ENCODE measurements at regions of chr20 and their contacts with region 1.

Region 1: DNA sequence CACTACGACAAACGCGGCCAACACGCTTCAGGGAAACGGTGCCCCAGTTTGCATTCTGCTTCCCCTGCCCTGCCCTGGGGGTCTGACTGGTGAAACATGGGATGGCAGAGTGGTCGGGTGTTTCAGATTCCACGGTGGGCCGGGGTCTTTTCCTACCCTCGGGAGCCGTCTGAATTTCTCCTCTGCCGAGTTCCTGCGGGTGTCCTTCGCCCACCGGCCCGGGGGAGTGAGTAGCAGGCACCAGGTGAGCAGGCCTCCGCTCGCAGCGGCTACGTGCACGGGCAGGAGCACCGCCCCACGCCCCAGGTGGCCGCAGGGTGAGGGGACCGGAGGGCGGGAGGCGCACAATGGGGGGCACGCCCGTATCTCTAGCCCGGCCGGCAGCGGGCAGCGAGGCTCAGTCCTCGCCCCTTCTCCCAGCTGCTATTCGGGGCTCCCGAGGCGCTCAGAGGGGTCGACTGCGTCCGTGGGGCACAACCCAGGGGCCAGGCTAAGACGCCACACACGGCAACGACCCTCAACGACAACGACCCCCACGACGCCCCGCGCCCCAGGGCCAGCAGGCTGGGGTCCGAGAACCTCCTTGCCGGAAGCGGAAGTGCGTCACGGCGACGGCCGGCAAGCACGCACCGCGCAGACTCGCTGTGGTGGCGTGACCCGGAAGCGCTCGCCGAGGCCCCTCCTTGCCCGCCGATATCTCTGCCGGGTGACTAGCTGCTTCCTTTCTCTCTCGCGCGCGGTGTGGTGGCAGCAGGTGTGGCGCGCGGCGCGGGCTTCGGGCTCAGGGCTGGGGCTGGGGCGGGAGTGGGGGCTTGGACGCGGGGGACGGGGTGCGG is at the start of gene RPS21:
- DNase-seq: peak; percentile 89 to 95 (median 92)
- ATAC-seq: peak; percentile 95
- H3K4me3 ChIP-seq: peak within 1 kb of the TSS; percentile 94
- H3K4me3 Mint-ChIP-seq: peak within 1 kb of the TSS; percentile 90 to 96 (median 92)
- H3K27ac ChIP-seq: peak within 1 kb of the TSS; percentile 98
- H3K27ac Mint-ChIP-seq: peak within 1 kb of the TSS; percentile 89 to 96 (median 93)
- H3K4me1 ChIP-seq: peaks cover 24 to 28% of the 10 kb centered on the region in 2 donors
- H3K4me1 Mint-ChIP-seq: peaks cover 40 to 59% (median 50%) of the 10 kb centered on the region in 7 donors
- H3K27me3 ChIP-seq: no peaks in the 10 kb centered on the region
- H3K27me3 Mint-ChIP-seq: no peaks in the 10 kb centered on the region
- total RNA-seq, gene RPS21: 2,026 to 3,407 (median 3,308) TPM

Region 2: GRCh38 chr20:62010551-62011402 is 375.8 kb before region 1 on chr20:
- CTCF ChIA-PET with region 1: interaction called, 3 read pairs
- POLR2A ChIA-PET with region 1: no interaction called
- intact Hi-C with region 1: loop called (anchors 1 to 5 kb)
- DNase-seq: peak; percentile 36 to 70 (median 66)
- ATAC-seq: peak; percentile 81
- H3K4me3 ChIP-seq: no peak overlapping the region
- H3K4me3 Mint-ChIP-seq: peak overlapping the region in 1 of 10 donors; percentile 6
- H3K27ac ChIP-seq: no peak overlapping the region
- H3K27ac Mint-ChIP-seq: peak overlapping the region in 6 of 9 donors; percentile 6 to 65 (median 43)
- H3K4me1 ChIP-seq: peaks cover 0 to 4% of the 10 kb centered on the region in 2 donors
- H3K4me1 Mint-ChIP-seq: peaks cover 6 to 24% (median 10%) of the 10 kb centered on the region in 7 donors
- H3K27me3 ChIP-seq: no peaks in the 10 kb centered on the region
- H3K27me3 Mint-ChIP-seq: no peaks in the 10 kb centered on the region

Region 3: DNA sequence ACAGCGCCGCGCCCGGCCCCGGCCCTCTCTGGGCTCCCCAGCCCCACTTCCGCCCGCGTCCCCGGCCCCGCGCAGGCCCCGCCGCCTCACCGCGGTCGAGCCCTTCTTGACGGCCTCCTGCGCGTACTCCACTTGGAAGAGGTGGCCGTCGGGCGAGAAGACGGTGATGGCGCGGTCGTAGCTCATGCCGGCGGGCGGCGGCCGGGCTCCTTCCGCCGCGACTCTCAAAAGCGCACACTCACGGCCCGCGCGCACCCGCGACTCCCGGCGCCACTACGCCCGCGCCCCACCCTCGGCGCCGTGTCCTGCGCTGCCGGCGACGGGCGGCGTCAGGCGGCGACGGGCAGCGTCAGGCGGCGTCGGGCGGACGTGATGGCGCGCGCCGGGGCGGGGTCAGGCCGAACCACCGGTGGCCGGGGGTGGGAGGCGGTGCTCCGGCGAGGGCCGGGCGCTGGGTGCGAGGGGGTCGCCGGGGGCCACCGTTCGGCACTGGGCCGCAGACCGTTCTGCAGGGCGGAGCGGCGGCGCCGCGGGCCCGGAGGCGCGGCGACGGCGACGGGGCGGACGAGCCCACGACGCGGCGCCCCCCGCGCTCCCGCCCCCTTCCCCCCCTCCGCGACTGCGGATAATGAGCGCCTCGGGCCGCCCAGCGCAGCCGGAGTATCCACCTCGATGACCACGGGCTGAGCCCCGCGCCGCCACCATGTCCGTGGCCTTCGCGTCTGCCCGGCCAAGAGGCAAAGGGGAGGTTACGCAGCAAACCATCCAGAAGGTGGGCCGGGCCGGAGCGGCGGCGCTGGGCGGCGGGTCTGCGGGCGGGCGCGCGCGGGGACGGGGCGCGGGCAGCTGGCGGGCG is 243.3 kb before region 1 on chr20 and contains the starts of genes PSMA7 and SS18L1:
- CTCF ChIA-PET with region 1: no interaction called
- POLR2A ChIA-PET with region 1: no interaction called
- intact Hi-C with region 1: loop called in 1 of 2 experiments (anchors 5 kb)
- DNase-seq: peak; percentile 79 to 90 (median 87)
- ATAC-seq: peak; percentile 91
- H3K4me3 ChIP-seq: peak within 1 kb of the TSS; percentile 65
- H3K4me3 Mint-ChIP-seq: peak within 1 kb of the TSS; percentile 89 to 98 (median 92)
- H3K27ac ChIP-seq: peak within 1 kb of the TSS; percentile 75
- H3K27ac Mint-ChIP-seq: peak within 1 kb of the TSS; percentile 80 to 97 (median 93)
- H3K4me1 ChIP-seq: peaks cover 28 to 36% of the 10 kb centered on the region in 2 donors
- H3K4me1 Mint-ChIP-seq: peaks cover 36 to 64% (median 55%) of the 10 kb centered on the region in 7 donors
- H3K27me3 ChIP-seq: no peaks in the 10 kb centered on the region
- H3K27me3 Mint-ChIP-seq: no peaks in the 10 kb centered on the region
- total RNA-seq, gene PSMA7: 125 to 301 (median 165) TPM
- total RNA-seq, gene SS18L1: 17.8 to 26.7 (median 22.6) TPM

Region 4: GRCh38 chr20:62258499-62259293 is 127.9 kb before region 1 on chr20:
- CTCF ChIA-PET with region 1: no interaction called
- POLR2A ChIA-PET with region 1: no interaction called
- intact Hi-C with region 1: no loop called
- DNase-seq: no peak
- ATAC-seq: no peak
- H3K4me3 ChIP-seq: no peak overlapping the region
- H3K4me3 Mint-ChIP-seq: no peak overlapping the region
- H3K27ac ChIP-seq: no peak overlapping the region
- H3K27ac Mint-ChIP-seq: no peak overlapping the region
- H3K4me1 ChIP-seq: no peaks in the 10 kb centered on the region
- H3K4me1 Mint-ChIP-seq: peaks cover 0 to 16% (median 9%) of the 10 kb centered on the region in 7 donors
- H3K27me3 ChIP-seq: no peaks in the 10 kb centered on the region
- H3K27me3 Mint-ChIP-seq: no peaks in the 10 kb centered on the region

Region 5: DNA sequence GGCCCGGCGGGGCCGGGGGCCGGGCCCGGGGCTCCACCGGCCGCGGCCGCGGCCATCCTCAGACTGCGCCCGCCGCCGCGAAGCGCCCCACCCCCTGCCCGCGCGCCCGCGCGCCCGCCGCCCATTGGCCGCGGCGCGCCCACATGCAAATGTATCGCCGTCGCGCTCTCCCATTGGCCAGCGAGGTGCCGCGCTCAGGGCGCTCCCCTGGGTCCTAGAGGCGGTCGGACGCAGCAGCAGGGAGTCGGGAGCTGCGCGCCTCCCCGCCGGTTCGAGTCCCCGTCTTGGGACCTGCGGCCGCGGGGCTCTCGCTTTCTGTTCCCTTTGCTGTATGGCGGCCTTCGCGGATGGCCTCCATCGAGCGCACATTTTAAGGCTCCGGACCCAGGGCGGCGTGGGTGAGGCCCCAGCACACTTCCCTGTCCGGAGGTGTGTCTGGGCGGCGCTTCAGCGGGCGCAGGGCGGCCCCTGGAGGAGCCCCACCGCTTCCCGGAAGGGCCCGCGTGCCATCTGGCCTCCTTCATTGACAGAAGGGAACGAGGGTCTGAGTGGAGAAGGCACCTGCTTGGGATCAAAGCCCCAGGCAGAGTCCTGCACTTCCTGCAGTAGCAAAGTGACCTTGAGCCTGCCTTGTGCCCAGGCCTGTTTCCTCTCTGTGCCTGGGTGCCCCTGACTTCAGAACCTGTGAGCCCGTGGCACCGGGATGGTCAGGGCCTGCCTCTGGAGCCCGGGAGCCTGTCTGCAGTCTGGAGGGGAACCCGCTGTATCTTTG is 20.8 kb after region 1 on chr20 and contains the start of gene CABLES2:
- CTCF ChIA-PET with region 1: interaction called, 4 read pairs
- POLR2A ChIA-PET with region 1: interaction called, 3 read pairs
- intact Hi-C with region 1: loop called (anchors 1 kb)
- DNase-seq: peak; percentile 86 to 94 (median 91)
- ATAC-seq: peak; percentile 98
- H3K4me3 ChIP-seq: peak within 1 kb of the TSS; percentile 74
- H3K4me3 Mint-ChIP-seq: peak within 1 kb of the TSS; percentile 68 to 90 (median 82)
- H3K27ac ChIP-seq: peak within 1 kb of the TSS; percentile 76
- H3K27ac Mint-ChIP-seq: peak within 1 kb of the TSS in 8 of 9 donors; percentile 52 to 88 (median 68)
- H3K4me1 ChIP-seq: peaks cover 17 to 23% of the 10 kb centered on the region in 2 donors
- H3K4me1 Mint-ChIP-seq: peaks cover 19 to 31% (median 26%) of the 10 kb centered on the region in 7 donors
- H3K27me3 ChIP-seq: no peaks in the 10 kb centered on the region
- H3K27me3 Mint-ChIP-seq: peaks cover 0 to 3% (median 0%) of the 10 kb centered on the region in 5 donors
- total RNA-seq, gene CABLES2: 4.3 to 16.7 (median 6.3) TPM

Region 6: GRCh38 chr20:63216041-63216848 is 829.6 kb after region 1 on chr20 and contains the start of gene YTHDF1:
- CTCF ChIA-PET with region 1: no interaction called
- POLR2A ChIA-PET with region 1: no interaction called
- intact Hi-C with region 1: loop called in 1 of 2 experiments (anchors 10 kb)
- DNase-seq: peak; percentile 93 to 98 (median 96)
- ATAC-seq: peak; percentile 97
- H3K4me3 ChIP-seq: peak within 1 kb of the TSS; percentile 78
- H3K4me3 Mint-ChIP-seq: peak within 1 kb of the TSS; percentile 88 to 97 (median 92)
- H3K27ac ChIP-seq: peak within 1 kb of the TSS; percentile 95
- H3K27ac Mint-ChIP-seq: peak within 1 kb of the TSS; percentile 86 to 96 (median 91)
- H3K4me1 ChIP-seq: peaks cover 10 to 39% of the 10 kb centered on the region in 2 donors
- H3K4me1 Mint-ChIP-seq: peaks cover 34 to 49% (median 46%) of the 10 kb centered on the region in 7 donors
- H3K27me3 ChIP-seq: no peaks in the 10 kb centered on the region
- H3K27me3 Mint-ChIP-seq: peaks cover 0 to 6% (median 0%) of the 10 kb centered on the region in 5 donors
- total RNA-seq, gene YTHDF1: 35.9 to 52.1 (median 42.0) TPM